ENCODE measurements at regions of chr6 and their contacts with region 1.

Region 1: GRCh38 chr6:32868257-32868788 is 14.3 kb downstream of the PSMB9 start:
- DNase-seq: peak; percentile 71
- ATAC-seq: peak; percentile 80
- H3K4me3 ChIP-seq: no peak overlapping the region
- H3K27ac ChIP-seq: no peak overlapping the region
- H3K4me1 ChIP-seq: 0 out of 2 replicates have a peak, but pooled peaks cover 9% of the 10 kb centered on the region
- H3K27me3 ChIP-seq: peaks cover 0 to 19% of the 10 kb centered on the region in 2 experiments; a peak in 3 of 5 replicates
- CTCF ChIP-seq: peak; percentile 90
- EP300 ChIP-seq: no peak
- POLR2A ChIP-seq: no peak
- RAD21 ChIP-seq: peak; percentile 89

Region 2: DNA sequence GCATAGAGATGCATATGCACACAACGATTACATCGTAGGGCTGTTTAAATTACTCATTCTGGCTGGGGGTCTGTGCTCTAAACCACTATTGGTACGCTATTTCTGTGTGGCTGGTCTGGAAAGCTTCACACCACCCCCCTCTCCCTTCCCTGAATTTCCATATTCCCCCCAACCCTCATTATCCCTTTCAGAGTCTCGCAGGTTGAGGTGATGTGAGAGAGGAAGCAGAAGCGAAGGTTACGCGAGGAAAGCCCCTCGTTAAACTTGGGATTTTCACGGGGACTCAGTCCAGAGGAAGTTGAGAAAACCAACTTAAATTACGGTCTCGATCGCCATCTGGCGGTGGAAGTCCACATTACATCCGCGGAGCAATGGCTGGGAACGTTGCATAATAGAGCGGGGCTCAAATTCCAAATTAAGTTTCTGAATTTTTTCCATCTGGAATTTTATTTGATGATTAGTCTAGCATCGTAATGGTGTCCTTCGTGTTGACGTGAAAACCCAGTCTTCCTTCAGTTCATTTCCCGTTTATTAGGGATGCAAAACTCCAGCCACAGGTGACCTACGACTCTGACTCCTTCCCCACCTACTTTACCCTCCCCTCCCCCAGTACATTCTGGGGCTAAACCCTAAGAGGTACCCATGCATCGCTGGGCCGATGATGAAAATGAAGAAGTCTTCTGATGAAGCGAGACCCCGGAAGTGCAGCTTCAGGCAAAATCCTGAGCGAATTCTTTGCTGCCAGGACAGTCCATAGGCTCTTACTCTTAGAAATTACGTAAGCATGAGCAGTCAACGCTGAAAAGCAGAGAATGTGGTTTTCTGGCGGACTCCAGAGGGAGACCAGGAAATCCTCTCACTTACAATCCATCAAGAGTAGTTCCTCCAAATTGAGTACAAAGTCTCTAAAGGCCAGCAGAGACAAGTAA is 71.2 kb before region 1 on chr6:
- CTCF ChIA-PET with region 1: interaction called, 5 read pairs
- POLR2A ChIA-PET with region 1: no interaction called
- in situ Hi-C with region 1: no loop called
- intact Hi-C with region 1: loop called (anchors 1 kb)
- DNase-seq: peak; percentile 57
- ATAC-seq: peak; percentile 77
- H3K4me3 ChIP-seq: peak overlapping the region in 2 of 3 experiments; percentile 23 to 48; a peak in 3 of 6 replicates
- H3K27ac ChIP-seq: no peak overlapping the region
- H3K4me1 ChIP-seq: peaks cover 15% of the 10 kb centered on the region
- H3K27me3 ChIP-seq: peaks cover 0 to 40% of the 10 kb centered on the region in 2 experiments; a peak in 3 of 5 replicates
- CTCF ChIP-seq: peak; percentile 88
- EP300 ChIP-seq: no peak
- POLR2A ChIP-seq: no peak
- RAD21 ChIP-seq: peak; percentile 76

Region 3: GRCh38 chr6:32825966-32826365 is 42.4 kb before region 1 on chr6:
- CTCF ChIA-PET with region 1: interaction called, 18 read pairs
- POLR2A ChIA-PET with region 1: no interaction called
- in situ Hi-C with region 1: loop called (anchors 5 kb)
- intact Hi-C with region 1: loop called (anchors 1 kb)
- DNase-seq: peak; percentile 55
- ATAC-seq: peak; percentile 87
- H3K4me3 ChIP-seq: no peak overlapping the region
- H3K27ac ChIP-seq: no peak overlapping the region
- H3K4me1 ChIP-seq: no peaks in the 10 kb centered on the region
- H3K27me3 ChIP-seq: no peaks in the 10 kb centered on the region
- CTCF ChIP-seq: peak; percentile 76
- EP300 ChIP-seq: no peak
- POLR2A ChIP-seq: no peak
- RAD21 ChIP-seq: peak; percentile 64

Region 4: GRCh38 chr6:32838114-32838958 is 30.0 kb before region 1 on chr6 and contains the start of gene TAP2:
- CTCF ChIA-PET with region 1: interaction called, 65 read pairs
- POLR2A ChIA-PET with region 1: interaction called, 23 read pairs
- in situ Hi-C with region 1: loop called (anchors 5 kb)
- intact Hi-C with region 1: loop called (anchors 1 kb)
- DNase-seq: peak; percentile 89
- ATAC-seq: peak; percentile 97
- H3K4me3 ChIP-seq: peak within 1 kb of the TSS; percentile 82 to 87 (median 86)
- H3K27ac ChIP-seq: peak within 1 kb of the TSS; percentile 80
- H3K4me1 ChIP-seq: peaks cover 24% of the 10 kb centered on the region
- H3K27me3 ChIP-seq: no peaks in the 10 kb centered on the region
- CTCF ChIP-seq: peak; percentile 99
- EP300 ChIP-seq: no peak
- POLR2A ChIP-seq: peak; percentile 60 to 73
- RAD21 ChIP-seq: peak; percentile 99
- total RNA-seq, gene TAP2: 9.8 and 17.6 TPM in 2 replicates

Region 5: DNA sequence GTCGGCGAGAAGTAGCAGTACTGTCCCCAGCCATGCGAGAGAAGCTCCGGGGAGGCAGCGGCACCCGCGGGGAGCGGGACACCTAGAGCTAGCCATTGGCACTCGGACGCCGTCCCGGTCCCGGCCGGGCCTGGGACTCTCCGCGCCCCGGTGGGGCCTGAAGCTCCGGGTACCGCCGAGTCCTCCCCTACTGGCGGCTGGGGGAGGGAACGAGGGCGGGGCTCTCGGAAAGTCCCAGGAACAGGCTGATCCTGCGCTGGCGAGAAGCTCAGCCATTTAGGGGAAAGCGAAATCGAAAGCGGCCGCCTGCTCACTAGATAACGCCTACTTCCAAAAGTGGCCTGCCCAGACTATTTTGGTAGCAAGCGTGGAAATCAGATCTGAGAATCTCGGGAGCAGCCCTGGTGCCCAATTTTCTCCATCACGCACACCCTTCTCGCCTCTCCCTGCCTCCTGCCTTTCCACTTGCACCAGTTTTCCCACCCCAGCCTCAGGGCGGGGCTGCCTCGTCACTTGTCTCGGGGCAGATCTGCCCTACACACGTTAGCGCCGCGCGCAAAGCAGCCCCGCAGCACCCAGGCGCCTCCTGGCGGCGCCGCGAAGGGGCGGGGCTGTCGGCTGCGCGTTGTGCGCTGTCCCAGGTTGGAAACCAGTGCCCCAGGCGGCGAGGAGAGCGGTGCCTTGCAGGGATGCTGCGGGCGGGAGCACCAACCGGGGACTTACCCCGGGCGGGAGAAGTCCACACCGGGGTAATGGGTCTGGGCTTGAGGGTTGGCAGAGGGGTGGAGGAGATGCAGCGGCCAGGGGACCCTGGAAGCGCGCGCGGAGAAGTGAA is 14.6 kb before region 1 on chr6 and contains the starts of genes PSMB9 and TAP1:
- CTCF ChIA-PET with region 1: interaction called, 4 read pairs
- POLR2A ChIA-PET with region 1: interaction called, 11 read pairs
- in situ Hi-C with region 1: no loop called
- intact Hi-C with region 1: no loop called
- DNase-seq: peak; percentile 88
- ATAC-seq: peak; percentile 89
- H3K4me3 ChIP-seq: peak within 1 kb of the TSS; percentile 93 to 96 (median 95)
- H3K27ac ChIP-seq: peak within 1 kb of the TSS; percentile 62
- H3K4me1 ChIP-seq: peaks cover 26% of the 10 kb centered on the region
- H3K27me3 ChIP-seq: no peaks in the 10 kb centered on the region; a peak in 1 of 5 replicates
- CTCF ChIP-seq: peak; percentile 97
- EP300 ChIP-seq: peak in 1 of 2 experiments; percentile 2; a peak in 1 of 4 replicates
- POLR2A ChIP-seq: peak; percentile 61 to 80
- RAD21 ChIP-seq: peak; percentile 94
- total RNA-seq, gene PSMB9: 16.0 and 21.4 TPM in 2 replicates
- total RNA-seq, gene TAP1: 23.0 and 52.2 TPM in 2 replicates

Measured in HepG2 (cell line).